ENCODE measurements at regions of chr3 and their contacts with region 1.

Region 1: GRCh38 chr3:195873971-195874370 is 34.4 kb downstream of the TNK2 start:
- DNase-seq: peak; percentile 55
- H3K4me3 ChIP-seq: no peak overlapping the region
- H3K27ac ChIP-seq: no peak overlapping the region
- H3K4me1 ChIP-seq: peaks cover 24% of the 10 kb centered on the region
- H3K27me3 ChIP-seq: no peaks in the 10 kb centered on the region
- CTCF ChIP-seq: no peak

Region 2: GRCh38 chr3:195760345-195761122 is 113.4 kb before region 1 on chr3:
- CTCF ChIA-PET with region 1: no interaction called
- dilution Hi-C with region 1: no loop called
- in situ Hi-C with region 1: no loop called
- intact Hi-C with region 1: no loop called
- DNase-seq: no peak
- H3K4me3 ChIP-seq: no peak overlapping the region
- H3K27ac ChIP-seq: no peak overlapping the region
- H3K4me1 ChIP-seq: no peaks in the 10 kb centered on the region
- H3K27me3 ChIP-seq: peaks cover 4% of the 10 kb centered on the region
- CTCF ChIP-seq: no peak

Region 3: GRCh38 chr3:195914648-195915473 is 40.9 kb after region 1 on chr3:
- CTCF ChIA-PET with region 1: no interaction called
- dilution Hi-C with region 1: loop called (anchors 5 kb)
- in situ Hi-C with region 1: no loop called
- intact Hi-C with region 1: loop called (anchors 2 kb)
- DNase-seq: peak; percentile 100
- H3K4me3 ChIP-seq: peak overlapping the region in 1 of 3 experiments; percentile 16
- H3K27ac ChIP-seq: peak overlapping the region; percentile 59
- H3K4me1 ChIP-seq: peaks cover 56% of the 10 kb centered on the region
- H3K27me3 ChIP-seq: no peaks in the 10 kb centered on the region
- CTCF ChIP-seq: peak; percentile 87 to 98

Region 4: DNA sequence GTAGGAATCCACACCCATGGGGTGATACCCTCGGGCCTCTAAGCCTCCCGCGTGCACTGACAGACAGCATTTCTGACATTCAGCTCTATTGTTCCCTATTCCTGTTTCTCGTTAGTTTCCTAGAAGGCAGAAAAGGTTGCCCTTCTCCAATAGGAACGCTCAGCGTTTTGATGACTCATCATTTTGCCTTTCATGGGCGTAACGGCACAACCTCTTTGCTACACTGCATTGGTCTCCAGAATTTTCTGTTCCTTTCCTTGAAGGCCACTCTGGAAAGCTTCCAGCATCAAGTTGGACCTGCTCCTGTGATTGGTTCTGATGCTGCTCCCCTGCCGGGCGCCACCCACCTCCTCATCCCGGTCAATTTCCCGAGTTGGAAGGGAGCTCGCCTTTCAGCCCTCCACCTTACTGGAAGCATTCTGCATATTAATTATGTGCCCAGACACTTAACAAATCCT is 47.4 kb after region 1 on chr3:
- CTCF ChIA-PET with region 1: no interaction called
- dilution Hi-C with region 1: loop called (anchors 5 kb)
- in situ Hi-C with region 1: no loop called
- intact Hi-C with region 1: no loop called
- DNase-seq: no peak
- H3K4me3 ChIP-seq: no peak overlapping the region
- H3K27ac ChIP-seq: no peak overlapping the region
- H3K4me1 ChIP-seq: peaks cover 6% of the 10 kb centered on the region
- H3K27me3 ChIP-seq: peaks cover 2% of the 10 kb centered on the region
- CTCF ChIP-seq: no peak

Measured in mammary epithelial cell (primary cell).